ENCODE measurements at regions of chr1 and their contacts with region 1.

Region 1: DNA sequence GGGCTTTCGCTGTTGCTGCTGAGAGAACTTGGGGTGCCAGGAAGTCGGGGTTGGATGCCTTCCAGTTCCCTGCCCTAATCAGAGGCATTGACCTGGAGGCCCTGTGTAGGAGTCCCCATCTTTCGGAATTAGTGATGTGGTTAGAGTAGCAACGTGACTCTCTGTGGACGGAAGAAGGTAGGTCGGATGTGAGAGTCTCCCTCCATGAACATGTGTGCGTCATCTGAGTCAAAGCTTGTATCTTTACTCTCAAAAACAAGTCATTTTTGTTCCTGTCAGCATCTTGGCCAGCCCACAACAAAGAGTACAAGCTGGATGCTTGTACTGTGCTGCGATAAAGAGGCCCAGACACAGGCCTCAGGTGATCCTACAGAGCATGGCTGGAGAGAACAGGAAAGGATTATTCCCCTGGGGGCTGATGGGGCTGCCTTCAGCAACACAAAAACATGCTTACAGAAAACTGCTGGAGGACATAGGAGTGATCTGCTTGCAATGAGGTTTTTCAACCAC is 31.0 kb upstream of the IL10 start:
- DNase-seq: peak; percentile 87
- ATAC-seq: peak; percentile 91
- H3K4me3 Mint-ChIP-seq: peak overlapping the region; percentile 0
- H3K27ac Mint-ChIP-seq: peak overlapping the region; percentile 77
- H3K4me1 Mint-ChIP-seq: peaks cover 67% of the 10 kb centered on the region
- H3K27me3 Mint-ChIP-seq: peaks cover 21% of the 10 kb centered on the region

Region 2: GRCh38 chr1:206575165-206575893 is 227.9 kb before region 1 on chr1:
- CTCF ChIA-PET with region 1: no interaction called
- POLR2A ChIA-PET with region 1: no interaction called
- intact Hi-C with region 1: loop called in 1 of 2 experiments (anchors 1 kb)
- DNase-seq: peak; percentile 53
- ATAC-seq: peak; percentile 13
- H3K4me3 Mint-ChIP-seq: peak overlapping the region; percentile 59
- H3K27ac Mint-ChIP-seq: peak overlapping the region; percentile 99
- H3K4me1 Mint-ChIP-seq: peaks cover 99% of the 10 kb centered on the region
- H3K27me3 Mint-ChIP-seq: no peaks in the 10 kb centered on the region

Region 3: DNA sequence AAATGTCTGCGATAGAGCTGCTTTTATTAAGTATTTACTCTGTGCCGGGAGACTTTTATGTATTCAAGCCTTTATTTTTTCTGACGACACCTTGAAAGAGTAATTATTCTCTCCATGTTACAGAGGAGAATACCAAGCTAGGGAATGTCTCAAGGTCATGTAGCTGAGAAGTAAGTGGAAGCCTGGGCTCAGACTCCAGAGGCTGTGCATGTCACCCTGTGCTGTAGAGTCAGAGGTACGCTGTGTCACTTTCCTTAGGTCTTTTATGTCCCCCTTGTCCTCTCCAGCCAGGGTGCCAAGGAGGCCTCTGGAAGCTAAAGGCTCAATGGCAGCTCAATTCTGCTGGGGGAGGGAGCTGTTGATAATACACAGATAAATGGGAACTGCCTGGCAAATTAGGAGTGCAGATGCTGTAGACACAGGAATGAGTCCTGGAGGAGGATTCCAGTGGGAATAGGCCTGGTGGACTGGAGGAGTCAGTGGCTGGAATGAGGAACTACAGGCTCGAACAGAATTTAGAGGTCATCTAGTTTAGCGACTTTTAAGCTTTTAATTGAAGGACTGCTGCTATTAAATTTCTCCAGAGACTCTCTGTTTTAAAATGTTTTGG is 42.0 kb before region 1 on chr1:
- CTCF ChIA-PET with region 1: interaction called, 21 read pairs
- POLR2A ChIA-PET with region 1: interaction called, 4 read pairs
- intact Hi-C with region 1: loop called in 1 of 2 experiments (anchors 1 kb)
- DNase-seq: no peak
- ATAC-seq: no peak
- H3K4me3 Mint-ChIP-seq: no peak overlapping the region
- H3K27ac Mint-ChIP-seq: no peak overlapping the region
- H3K4me1 Mint-ChIP-seq: peaks cover 21% of the 10 kb centered on the region
- H3K27me3 Mint-ChIP-seq: peaks cover 3% of the 10 kb centered on the region

Region 4: GRCh38 chr1:206766251-206766856 is 36.9 kb before region 1 on chr1:
- CTCF ChIA-PET with region 1: interaction called, 21 read pairs
- POLR2A ChIA-PET with region 1: interaction called, 6 read pairs
- intact Hi-C with region 1: loop called (anchors 1 to 2 kb)
- DNase-seq: peak; percentile 82
- ATAC-seq: peak; percentile 64
- H3K4me3 Mint-ChIP-seq: peak overlapping the region; percentile 29
- H3K27ac Mint-ChIP-seq: peak overlapping the region; percentile 44
- H3K4me1 Mint-ChIP-seq: peaks cover 63% of the 10 kb centered on the region
- H3K27me3 Mint-ChIP-seq: peaks cover 10% of the 10 kb centered on the region

Region 5: GRCh38 chr1:206784471-206784903 is 18.8 kb before region 1 on chr1:
- CTCF ChIA-PET with region 1: interaction called, 9 read pairs
- POLR2A ChIA-PET with region 1: interaction called, 4 read pairs
- intact Hi-C with region 1: loop called (anchors 1 kb)
- DNase-seq: peak; percentile 94
- ATAC-seq: peak; percentile 85
- H3K4me3 Mint-ChIP-seq: peak overlapping the region; percentile 18
- H3K27ac Mint-ChIP-seq: peak overlapping the region; percentile 71
- H3K4me1 Mint-ChIP-seq: peaks cover 57% of the 10 kb centered on the region
- H3K27me3 Mint-ChIP-seq: peaks cover 22% of the 10 kb centered on the region

Region 6: DNA sequence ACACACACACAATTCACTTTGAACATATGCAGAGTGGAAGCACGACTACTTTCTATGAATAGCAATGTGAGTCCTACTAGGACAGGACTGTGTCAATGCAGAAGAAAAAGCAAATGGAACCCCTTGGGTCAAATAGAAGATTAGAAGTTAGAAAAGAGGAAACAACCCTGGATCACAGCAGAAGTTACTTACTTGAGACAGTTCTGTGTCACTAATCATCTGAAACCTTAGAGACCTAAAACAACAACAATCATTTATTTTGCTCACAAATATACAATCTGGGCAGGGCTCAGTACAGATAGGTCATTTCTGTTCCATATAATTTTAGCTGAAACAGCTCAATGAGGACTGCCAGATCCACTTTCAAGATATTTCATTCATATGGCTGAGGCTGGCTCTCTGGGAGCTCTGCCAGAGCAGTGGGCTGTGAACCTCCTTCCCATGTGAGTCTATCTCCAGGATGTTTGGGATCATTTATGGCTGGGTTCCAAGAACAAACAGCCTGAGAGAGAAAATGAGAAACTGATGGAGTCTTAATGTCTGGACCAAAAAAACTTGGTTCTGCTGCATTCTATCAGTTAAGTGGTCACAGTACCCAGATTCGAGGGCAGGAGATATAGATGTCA is 11.6 kb after region 1 on chr1:
- CTCF ChIA-PET with region 1: interaction called, 15 read pairs
- POLR2A ChIA-PET with region 1: interaction called, 17 read pairs
- intact Hi-C with region 1: loop called (anchors 1 kb)
- DNase-seq: no peak
- ATAC-seq: no peak
- H3K4me3 Mint-ChIP-seq: no peak overlapping the region
- H3K27ac Mint-ChIP-seq: no peak overlapping the region
- H3K4me1 Mint-ChIP-seq: peaks cover 26% of the 10 kb centered on the region
- H3K27me3 Mint-ChIP-seq: peaks cover 2% of the 10 kb centered on the region

Region 7: GRCh38 chr1:206895830-206896242 is 92.6 kb after region 1 on chr1:
- CTCF ChIA-PET with region 1: interaction called, 3 read pairs
- POLR2A ChIA-PET with region 1: no interaction called
- intact Hi-C with region 1: loop called in 1 of 2 experiments (anchors 1 kb)
- DNase-seq: no peak
- ATAC-seq: no peak
- H3K4me3 Mint-ChIP-seq: no peak overlapping the region
- H3K27ac Mint-ChIP-seq: peak overlapping the region; percentile 49
- H3K4me1 Mint-ChIP-seq: peaks cover 88% of the 10 kb centered on the region
- H3K27me3 Mint-ChIP-seq: no peaks in the 10 kb centered on the region